ENCODE measurements at regions of chr1 and their contacts with region 1.

Region 1: GRCh38 chr1:169753552-169753951 is 19.7 kb upstream of the SELE start:
- DNase-seq: no peak
- H3K4me3 Mint-ChIP-seq: no peak overlapping the region
- H3K27ac Mint-ChIP-seq: no peak overlapping the region
- H3K4me1 Mint-ChIP-seq: no peaks in the 10 kb centered on the region
- H3K27me3 Mint-ChIP-seq: no peaks in the 10 kb centered on the region
- CTCF ChIP-seq: no peak

Region 2: GRCh38 chr1:169682071-169682470 is 71.5 kb before region 1 on chr1:
- CTCF ChIA-PET with region 1: no interaction called
- intact Hi-C with region 1: no loop called
- DNase-seq: no peak
- H3K4me3 Mint-ChIP-seq: no peak overlapping the region
- H3K27ac Mint-ChIP-seq: no peak overlapping the region
- H3K4me1 Mint-ChIP-seq: peaks cover 22% of the 10 kb centered on the region
- H3K27me3 Mint-ChIP-seq: no peaks in the 10 kb centered on the region
- CTCF ChIP-seq: no peak

Region 3: DNA sequence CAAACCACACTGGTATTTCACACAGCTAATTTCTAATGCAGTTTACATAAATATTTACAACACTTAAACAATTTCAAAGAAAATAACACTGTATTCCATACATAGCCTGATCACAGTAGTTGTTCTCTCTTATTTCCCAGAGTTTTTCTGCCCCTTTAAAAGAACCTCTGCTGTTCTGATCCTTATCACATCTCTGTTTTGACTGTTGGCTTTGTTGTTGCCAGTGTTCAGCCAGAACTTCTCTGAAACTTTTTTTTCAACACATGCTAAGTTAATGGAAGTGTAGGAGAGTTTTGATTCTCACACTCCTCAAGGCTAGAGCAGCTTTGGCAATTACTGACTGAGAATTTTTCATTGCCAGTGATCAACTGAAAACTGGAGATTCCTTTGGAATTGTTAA is 30.8 kb before region 1 on chr1:
- CTCF ChIA-PET with region 1: no interaction called
- intact Hi-C with region 1: loop called (anchors 2 kb)
- DNase-seq: no peak
- H3K4me3 Mint-ChIP-seq: no peak overlapping the region
- H3K27ac Mint-ChIP-seq: no peak overlapping the region
- H3K4me1 Mint-ChIP-seq: no peaks in the 10 kb centered on the region
- H3K27me3 Mint-ChIP-seq: no peaks in the 10 kb centered on the region
- CTCF ChIP-seq: no peak

Region 4: DNA sequence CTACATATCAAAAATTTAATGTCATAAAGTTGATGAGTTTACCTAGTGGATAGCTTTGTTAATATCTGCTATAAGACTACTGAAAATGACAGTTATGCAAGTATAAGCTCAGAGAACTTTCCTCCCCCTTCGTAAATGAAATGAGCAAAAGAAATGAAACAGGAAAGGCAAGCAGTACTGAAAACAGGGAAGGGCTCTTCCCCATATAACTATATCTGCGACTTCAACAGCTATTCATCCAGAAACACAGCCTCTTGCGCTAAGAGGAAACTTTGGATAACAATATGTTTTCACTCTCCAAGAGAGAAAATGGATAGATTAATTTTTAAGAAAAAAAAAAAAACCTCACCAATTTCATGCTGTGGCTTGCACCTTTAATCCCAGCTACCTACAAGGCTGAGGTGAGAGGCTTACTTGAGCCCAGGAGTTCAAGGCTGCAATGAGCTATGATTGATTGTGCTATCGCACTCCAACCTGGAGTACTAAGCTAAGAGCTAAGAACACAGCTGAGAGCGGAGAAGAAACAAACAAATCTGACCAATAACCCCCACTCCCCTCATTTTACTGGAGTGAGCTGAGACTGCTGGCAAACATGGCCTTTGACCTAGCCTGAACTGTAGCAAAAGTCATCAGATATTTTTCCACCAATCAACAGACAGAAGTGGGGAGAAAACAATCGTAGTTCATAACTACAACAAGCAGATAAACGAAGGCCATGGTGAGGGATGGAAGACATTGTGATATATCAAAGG is 12.2 kb after region 1 on chr1:
- CTCF ChIA-PET with region 1: no interaction called
- intact Hi-C with region 1: loop called (anchors 2 kb)
- DNase-seq: no peak
- H3K4me3 Mint-ChIP-seq: no peak overlapping the region
- H3K27ac Mint-ChIP-seq: no peak overlapping the region
- H3K4me1 Mint-ChIP-seq: peaks cover 16% of the 10 kb centered on the region
- H3K27me3 Mint-ChIP-seq: no peaks in the 10 kb centered on the region
- CTCF ChIP-seq: no peak

Region 5: GRCh38 chr1:169794530-169795416 is 41.2 kb after region 1 on chr1 and contains the start of gene METTL18:
- CTCF ChIA-PET with region 1: no interaction called
- intact Hi-C with region 1: no loop called
- DNase-seq: peak; percentile 94
- H3K4me3 Mint-ChIP-seq: peak within 1 kb of the TSS; percentile 93
- H3K27ac Mint-ChIP-seq: peak within 1 kb of the TSS; percentile 93
- H3K4me1 Mint-ChIP-seq: peaks cover 31% of the 10 kb centered on the region
- H3K27me3 Mint-ChIP-seq: no peaks in the 10 kb centered on the region
- CTCF ChIP-seq: no peak
- total RNA-seq, gene METTL18: 11.2 and 13.3 TPM in 2 replicates

Region 6: DNA sequence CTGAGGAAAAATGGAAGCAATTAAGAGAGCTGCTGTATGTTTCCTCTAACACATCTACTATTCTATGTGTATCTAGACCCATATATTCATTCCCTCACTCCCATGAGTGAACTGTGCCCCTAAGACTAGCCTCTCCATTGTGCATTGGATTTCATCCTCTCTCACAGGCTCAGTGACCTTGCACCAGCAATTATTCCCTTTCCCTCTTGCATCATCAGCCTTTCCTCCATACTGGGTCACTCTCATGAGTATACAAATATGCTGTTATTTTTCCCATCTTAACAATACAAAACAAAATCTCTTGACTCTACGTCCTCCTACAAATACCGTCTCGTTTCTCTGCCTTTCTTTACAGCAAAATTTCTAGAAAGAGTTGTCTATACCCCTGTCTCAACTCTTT is 70.6 kb after region 1 on chr1:
- CTCF ChIA-PET with region 1: no interaction called
- intact Hi-C with region 1: no loop called
- DNase-seq: no peak
- H3K4me3 Mint-ChIP-seq: no peak overlapping the region
- H3K27ac Mint-ChIP-seq: no peak overlapping the region
- H3K4me1 Mint-ChIP-seq: no peaks in the 10 kb centered on the region
- H3K27me3 Mint-ChIP-seq: no peaks in the 10 kb centered on the region
- CTCF ChIP-seq: no peak

Region 7: DNA sequence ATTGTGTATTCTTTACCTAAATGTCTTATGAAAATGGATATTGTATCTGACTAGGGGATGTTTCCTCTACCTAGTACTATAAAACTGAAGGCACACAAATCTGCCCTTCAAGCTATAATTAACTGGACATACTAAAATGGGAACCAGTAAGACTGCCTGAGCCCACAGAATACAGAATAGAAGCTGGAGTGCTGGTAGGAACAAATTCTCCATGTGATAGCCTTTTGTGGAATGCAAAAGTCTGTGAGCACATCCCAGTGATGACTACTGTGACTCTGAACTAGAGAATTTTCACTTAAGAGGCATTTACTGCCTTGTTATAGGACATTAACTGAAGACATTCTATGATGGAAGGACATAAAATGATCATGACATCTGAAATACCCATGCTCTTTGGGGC is 290.6 kb after region 1 on chr1:
- CTCF ChIA-PET with region 1: no interaction called
- intact Hi-C with region 1: no loop called
- DNase-seq: no peak
- H3K4me3 Mint-ChIP-seq: no peak overlapping the region
- H3K27ac Mint-ChIP-seq: no peak overlapping the region
- H3K4me1 Mint-ChIP-seq: no peaks in the 10 kb centered on the region
- H3K27me3 Mint-ChIP-seq: no peaks in the 10 kb centered on the region
- CTCF ChIP-seq: no peak

Measured in Calu3 (cell line).